H1 (cell line): ENCODE measurements at regions of chr1 and their contacts with region 1.

Region 1: GRCh38 chr1:180168786-180169639 is 14.3 kb downstream of the QSOX1 start:
- DNase-seq: peak in 1 of 2 experiments; percentile 76
- H3K4me3 ChIP-seq: no peak overlapping the region
- H3K27ac ChIP-seq: no peak overlapping the region
- H3K4me1 ChIP-seq: peaks cover 6 to 20% (median 16%) of the 10 kb centered on the region in 4 experiments
- H3K27me3 ChIP-seq: no peaks in the 10 kb centered on the region
- CTCF ChIP-seq: peak; percentile 89 to 95 (median 94)
- EP300 ChIP-seq: no peak
- POLR2A ChIP-seq: no peak
- RAD21 ChIP-seq: peak; percentile 61 to 76

Region 2: DNA sequence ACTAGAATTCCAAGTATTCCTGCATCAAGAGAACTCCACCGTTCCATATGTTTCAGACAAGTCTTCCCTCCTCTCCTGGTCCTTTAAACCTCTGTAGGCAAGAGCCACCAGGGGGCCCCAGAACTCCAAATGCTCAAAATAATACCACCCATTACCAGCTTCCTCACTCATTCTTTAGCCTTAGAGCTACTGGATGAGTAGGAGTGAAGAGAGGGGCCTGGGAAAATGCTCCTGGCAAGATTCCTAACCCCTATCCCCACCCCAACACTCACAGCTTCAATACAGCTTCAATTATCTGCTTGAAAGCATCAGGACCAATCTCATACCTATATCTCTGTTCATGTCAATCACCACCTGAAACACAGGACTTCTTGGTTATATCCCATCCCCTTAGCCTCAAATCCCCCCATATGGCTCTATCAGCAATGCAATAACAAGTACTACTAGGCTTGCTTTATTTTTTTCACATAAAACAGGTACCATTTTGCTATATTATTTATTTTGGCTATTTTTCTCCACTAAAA is 301.1 kb before region 1 on chr1:
- CTCF ChIA-PET with region 1: interaction called, 10 read pairs
- POLR2A ChIA-PET with region 1: interaction called, 4 read pairs
- DNase-seq: peak in 1 of 2 experiments; percentile 68
- H3K4me3 ChIP-seq: no peak overlapping the region
- H3K27ac ChIP-seq: no peak overlapping the region
- H3K4me1 ChIP-seq: no peaks in the 10 kb centered on the region
- H3K27me3 ChIP-seq: no peaks in the 10 kb centered on the region
- CTCF ChIP-seq: peak in 2 of 3 experiments; percentile 65 to 71; a peak in 3 of 4 replicates
- EP300 ChIP-seq: no peak
- POLR2A ChIP-seq: no peak
- RAD21 ChIP-seq: peak; percentile 63 to 80

Region 3: GRCh38 chr1:180101411-180101810 is 67.6 kb before region 1 on chr1:
- CTCF ChIA-PET with region 1: interaction called, 33 read pairs
- POLR2A ChIA-PET with region 1: interaction called, 3 read pairs
- DNase-seq: no peak
- H3K4me3 ChIP-seq: no peak overlapping the region
- H3K27ac ChIP-seq: no peak overlapping the region
- H3K4me1 ChIP-seq: no peaks in the 10 kb centered on the region
- H3K27me3 ChIP-seq: no peaks in the 10 kb centered on the region
- CTCF ChIP-seq: no peak
- EP300 ChIP-seq: no peak
- POLR2A ChIP-seq: no peak
- RAD21 ChIP-seq: no peak

Region 4: DNA sequence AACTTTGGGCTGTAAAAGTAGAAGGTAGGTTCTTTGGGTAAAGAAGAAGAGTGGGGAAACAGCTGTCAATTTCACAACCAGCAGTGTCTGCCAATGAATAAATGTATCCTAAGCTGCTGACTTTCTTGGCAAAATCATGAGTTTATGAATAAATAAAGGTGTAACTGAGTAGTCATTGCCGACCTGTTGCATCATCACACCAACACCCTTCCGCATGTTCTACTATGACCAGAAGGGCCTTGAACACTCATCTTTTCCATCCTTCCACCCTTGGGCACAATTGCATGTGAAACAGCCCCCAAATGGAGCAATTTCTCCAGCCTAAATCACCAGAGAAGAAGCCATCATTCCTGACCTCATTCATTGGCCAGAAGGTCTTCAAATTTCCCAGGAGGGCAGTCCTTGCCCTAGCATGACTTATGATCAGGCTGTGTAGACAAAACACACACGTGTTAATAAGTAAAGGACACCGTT is 45.5 kb before region 1 on chr1:
- CTCF ChIA-PET with region 1: interaction called, 12 read pairs
- POLR2A ChIA-PET with region 1: no interaction called
- DNase-seq: no peak
- H3K4me3 ChIP-seq: no peak overlapping the region
- H3K27ac ChIP-seq: no peak overlapping the region
- H3K4me1 ChIP-seq: 0 out of 7 replicates have a peak, but pooled peaks cover 0 to 4% (median 0%) of the 10 kb centered on the region in 4 experiments
- H3K27me3 ChIP-seq: no peaks in the 10 kb centered on the region
- CTCF ChIP-seq: no peak
- EP300 ChIP-seq: no peak
- POLR2A ChIP-seq: no peak
- RAD21 ChIP-seq: no peak

Region 5: DNA sequence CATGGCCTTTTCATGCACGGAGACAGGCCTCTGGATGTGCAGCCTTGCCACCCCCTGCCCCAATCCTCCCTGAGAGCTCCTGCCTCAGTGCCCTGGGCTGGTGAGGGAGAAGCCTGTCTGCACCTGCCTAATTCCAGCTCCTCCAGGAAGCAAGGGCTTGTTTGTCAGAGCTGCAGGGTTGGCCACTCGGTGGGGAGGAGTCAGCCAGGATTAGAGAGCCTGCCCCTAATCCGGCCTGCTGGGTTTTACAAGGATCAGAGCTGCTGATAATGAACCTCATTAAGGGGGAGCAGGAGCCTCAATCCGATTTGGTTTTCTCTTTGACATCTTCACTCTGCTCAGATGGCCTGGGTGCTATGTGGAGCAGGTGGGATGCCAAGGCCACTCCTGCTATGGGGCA is 29.2 kb after region 1 on chr1:
- CTCF ChIA-PET with region 1: interaction called, 26 read pairs
- POLR2A ChIA-PET with region 1: no interaction called
- DNase-seq: no peak
- H3K4me3 ChIP-seq: no peak overlapping the region
- H3K27ac ChIP-seq: no peak overlapping the region
- H3K4me1 ChIP-seq: peaks cover 0 to 1% (median 0%) of the 10 kb centered on the region in 4 experiments; a peak in 1 of 7 replicates
- H3K27me3 ChIP-seq: no peaks in the 10 kb centered on the region
- CTCF ChIP-seq: no peak
- EP300 ChIP-seq: no peak
- POLR2A ChIP-seq: no peak
- RAD21 ChIP-seq: no peak